Sigmoid colon (tissue), 7 donors: ENCODE measurements at regions of chr2 and their contacts with region 1.

Region 1: DNA sequence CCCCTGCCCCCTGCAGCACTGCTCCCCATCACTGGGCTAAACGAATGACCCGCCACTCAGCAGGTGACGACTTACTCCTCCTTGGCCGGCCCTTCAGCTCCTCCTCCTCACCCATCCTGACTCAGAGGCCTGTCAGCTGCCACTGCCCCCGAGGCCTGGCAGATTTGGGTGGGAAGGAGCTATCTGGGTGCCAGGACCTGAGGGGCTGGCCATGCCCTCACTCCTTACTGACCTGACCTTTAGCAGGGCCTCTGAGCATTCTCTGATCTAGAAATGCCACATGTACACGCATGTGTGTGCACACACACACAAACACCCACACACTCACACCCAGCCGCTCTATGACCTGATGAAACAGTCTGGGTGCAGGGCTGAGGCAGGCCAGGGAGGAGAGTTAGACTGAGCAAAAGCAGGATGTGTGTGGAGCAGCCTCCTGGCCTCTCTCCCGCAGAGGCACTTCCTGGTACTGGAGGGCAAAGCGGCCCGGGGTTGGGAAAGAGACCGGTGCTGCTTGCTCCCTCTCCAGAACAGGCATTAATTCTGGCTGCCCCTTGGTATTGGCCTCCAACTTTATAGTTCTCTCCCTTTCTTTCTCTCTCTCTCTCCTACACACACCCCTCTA is 68.0 kb downstream of the ZFP36L2 start:
- DNase-seq: peak; percentile 95
- H3K4me3 ChIP-seq: peak overlapping the region in 2 of 4 donors; percentile 1 to 17
- H3K27ac ChIP-seq: peak overlapping the region; percentile 83 to 88 (median 86)
- H3K4me1 ChIP-seq: peaks cover 0 to 30% (median 27%) of the 10 kb centered on the region in 4 donors
- H3K27me3 ChIP-seq: no peaks in the 10 kb centered on the region
- CTCF ChIP-seq: no peak
- EP300 ChIP-seq: no peak
- POLR2A ChIP-seq: no peak

Region 2: GRCh38 chr2:42974721-42975717 is 183.4 kb before region 1 on chr2:
- intact Hi-C with region 1: loop called (anchors 5 kb)
- DNase-seq: peak; percentile 89
- H3K4me3 ChIP-seq: peak overlapping the region; percentile 9 to 49 (median 44)
- H3K27ac ChIP-seq: peak overlapping the region; percentile 26 to 71 (median 66)
- H3K4me1 ChIP-seq: peaks cover 0 to 28% (median 20%) of the 10 kb centered on the region in 4 donors
- H3K27me3 ChIP-seq: no peaks in the 10 kb centered on the region
- CTCF ChIP-seq: peak; percentile 94 to 97 (median 96)
- EP300 ChIP-seq: no peak
- POLR2A ChIP-seq: no peak

Region 3: GRCh38 chr2:43018179-43019024 is 140.0 kb before region 1 on chr2:
- intact Hi-C with region 1: loop called (anchors 5 kb)
- DNase-seq: peak; percentile 98
- H3K4me3 ChIP-seq: no peak overlapping the region
- H3K27ac ChIP-seq: peak overlapping the region; percentile 56 to 75 (median 66)
- H3K4me1 ChIP-seq: peaks cover 0 to 17% (median 13%) of the 10 kb centered on the region in 4 donors
- H3K27me3 ChIP-seq: no peaks in the 10 kb centered on the region
- CTCF ChIP-seq: no peak
- EP300 ChIP-seq: peak in 2 of 4 donors; percentile 30 to 77
- POLR2A ChIP-seq: no peak

Region 4: DNA sequence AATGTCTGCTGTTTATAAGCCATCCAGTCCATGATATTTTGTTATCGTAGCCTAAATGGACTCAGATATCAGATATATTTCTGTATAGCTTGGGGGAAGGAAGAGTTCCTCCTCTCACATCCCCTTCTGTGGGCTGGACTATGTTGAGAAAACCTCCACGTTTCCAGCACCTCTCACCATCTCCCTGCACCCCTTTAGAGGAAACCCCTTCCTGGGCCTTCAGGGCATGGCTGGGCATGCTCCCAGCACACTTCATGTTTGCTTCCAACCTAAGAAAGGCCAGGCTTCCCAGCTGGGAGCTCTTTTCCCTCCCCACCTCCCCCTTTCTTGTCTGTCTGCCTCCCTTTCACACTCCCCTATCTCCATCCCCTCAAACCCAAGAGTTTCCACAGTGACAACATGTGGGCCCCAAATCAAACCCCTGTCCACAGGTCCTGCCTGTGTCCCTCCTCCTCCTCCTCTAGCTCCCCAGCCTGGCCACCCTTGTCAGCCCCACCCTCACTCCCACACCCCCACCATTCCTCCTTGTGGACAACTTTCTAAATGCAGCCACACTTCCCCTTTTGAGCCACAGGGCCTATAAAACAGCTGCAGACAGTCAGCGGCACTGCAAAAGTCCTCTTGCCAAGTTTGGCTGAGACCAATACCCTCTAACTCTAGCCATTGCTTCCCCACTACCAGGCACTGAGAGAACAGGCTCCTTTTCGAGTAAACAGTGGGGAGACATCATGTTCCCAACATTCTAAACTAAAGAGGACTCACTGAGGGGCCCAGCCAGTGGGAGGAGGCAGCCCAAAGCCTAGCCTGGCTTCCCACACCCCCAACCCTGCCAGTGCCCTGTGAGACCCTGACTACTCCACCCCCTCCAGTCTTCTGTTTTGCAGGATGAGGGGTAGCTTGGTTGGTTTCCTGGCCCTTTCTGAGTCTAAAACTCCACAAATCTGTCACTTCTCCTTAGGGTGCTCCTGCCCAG is 52.5 kb before region 1 on chr2:
- intact Hi-C with region 1: loop called (anchors 5 kb)
- DNase-seq: peak; percentile 90
- H3K4me3 ChIP-seq: no peak overlapping the region
- H3K27ac ChIP-seq: peak overlapping the region; percentile 75 to 86 (median 82)
- H3K4me1 ChIP-seq: peaks cover 0 to 90% (median 68%) of the 10 kb centered on the region in 4 donors
- H3K27me3 ChIP-seq: no peaks in the 10 kb centered on the region
- CTCF ChIP-seq: peak; percentile 46 to 81 (median 74)
- EP300 ChIP-seq: peak in 2 of 4 donors; percentile 31 to 38
- POLR2A ChIP-seq: no peak

Region 5: GRCh38 chr2:43178602-43179542 is 20.5 kb after region 1 on chr2:
- intact Hi-C with region 1: loop called (anchors 2 kb)
- DNase-seq: peak; percentile 94
- H3K4me3 ChIP-seq: no peak overlapping the region
- H3K27ac ChIP-seq: peak overlapping the region; percentile 67 to 78 (median 72)
- H3K4me1 ChIP-seq: peaks cover 0 to 19% (median 15%) of the 10 kb centered on the region in 4 donors
- H3K27me3 ChIP-seq: no peaks in the 10 kb centered on the region
- CTCF ChIP-seq: no peak
- EP300 ChIP-seq: no peak
- POLR2A ChIP-seq: no peak

Region 6: GRCh38 chr2:43219383-43220228 is 61.2 kb after region 1 on chr2:
- intact Hi-C with region 1: loop called (anchors 1 kb)
- DNase-seq: peak; percentile 95
- H3K4me3 ChIP-seq: peak overlapping the region; percentile 22 to 93 (median 56)
- H3K27ac ChIP-seq: peak overlapping the region; percentile 99 to 100 (median 100)
- H3K4me1 ChIP-seq: peaks cover 0 to 58% (median 55%) of the 10 kb centered on the region in 4 donors
- H3K27me3 ChIP-seq: no peaks in the 10 kb centered on the region
- CTCF ChIP-seq: no peak
- EP300 ChIP-seq: no peak
- POLR2A ChIP-seq: peak; percentile 60 to 68